Heart left ventricle (tissue), 16 donors: ENCODE measurements at regions of chr10 and their contacts with region 1.

Region 1: DNA sequence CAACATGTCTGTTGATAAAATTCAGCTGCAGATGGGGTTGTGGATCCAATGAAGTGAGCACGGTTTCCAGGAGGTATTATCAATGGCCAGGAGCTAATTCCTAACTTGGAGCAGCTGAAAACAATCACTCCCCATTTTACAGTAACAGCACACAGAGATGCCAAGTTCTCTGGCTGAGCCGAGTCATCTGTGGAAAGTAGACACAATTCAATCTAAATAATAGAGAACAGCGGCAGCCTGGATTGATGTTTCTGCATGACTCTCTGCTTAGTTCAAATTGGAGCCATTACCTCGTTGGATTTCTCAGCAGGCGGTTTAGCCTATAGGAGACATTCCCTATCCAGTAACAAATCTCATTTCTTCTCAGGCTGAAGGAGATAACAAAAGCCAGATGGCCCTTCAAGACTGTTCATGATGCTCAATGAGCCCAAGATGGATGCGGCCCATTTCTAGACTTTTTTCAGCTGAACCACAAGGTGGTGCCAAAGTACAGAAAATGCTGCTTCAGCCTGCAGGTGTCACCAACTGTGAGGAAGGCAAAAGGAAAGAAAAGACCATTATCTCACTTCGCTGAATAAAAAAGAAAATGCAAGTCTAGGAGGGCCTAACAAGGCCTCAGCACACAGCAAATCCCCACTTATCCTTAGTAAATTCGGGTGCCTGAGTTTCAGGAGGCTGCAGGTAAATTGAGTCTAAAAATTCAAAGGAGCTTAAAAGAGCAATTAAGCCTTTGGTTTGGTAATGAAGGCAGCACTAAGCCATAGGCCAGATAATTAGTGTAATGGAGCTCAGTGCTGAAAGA is 83.7 kb downstream of the SLC16A9 start:
- DNase-seq: peak in 3 of 5 donors; percentile 29 to 34 (median 31)
- ATAC-seq: peak; percentile 40 to 89 (median 82)
- H3K4me3 ChIP-seq: no peak overlapping the region
- H3K27ac ChIP-seq: peak overlapping the region in 2 of 12 donors; percentile 4 to 13
- H3K4me1 ChIP-seq: peaks cover 0 to 11% (median 0%) of the 10 kb centered on the region in 12 donors
- H3K27me3 ChIP-seq: peaks cover 0 to under 1% (median 0%) of the 10 kb centered on the region in 9 donors
- CTCF ChIP-seq: peak; percentile 67 to 90 (median 80)
- POLR2A ChIP-seq: no peak

Region 2: GRCh38 chr10:58781873-58782488 is 843.9 kb before region 1 on chr10:
- intact Hi-C with region 1: loop called in 5 of 10 experiments (anchors 2 to 10 kb)
- DNase-seq: no peak
- ATAC-seq: peak in 2 of 4 donors; percentile 51 to 58
- H3K4me3 ChIP-seq: no peak overlapping the region
- H3K27ac ChIP-seq: peak overlapping the region in 8 of 12 donors; percentile 5 to 61 (median 40)
- H3K4me1 ChIP-seq: peaks cover 0 to 46% (median 9%) of the 10 kb centered on the region in 12 donors
- H3K27me3 ChIP-seq: no peaks in the 10 kb centered on the region
- CTCF ChIP-seq: peak; percentile 39 to 72 (median 61)
- POLR2A ChIP-seq: no peak

Region 3: GRCh38 chr10:59234816-59235429 is 391.0 kb before region 1 on chr10:
- intact Hi-C with region 1: loop called (anchors 2 to 5 kb)
- DNase-seq: peak in 1 of 5 donors; percentile 15
- ATAC-seq: no peak
- H3K4me3 ChIP-seq: no peak overlapping the region
- H3K27ac ChIP-seq: no peak overlapping the region
- H3K4me1 ChIP-seq: no peaks in the 10 kb centered on the region
- H3K27me3 ChIP-seq: no peaks in the 10 kb centered on the region
- CTCF ChIP-seq: peak in 11 of 12 donors; percentile 44 to 75 (median 56)
- POLR2A ChIP-seq: no peak

Region 4: GRCh38 chr10:59434463-59435321 is 191.2 kb before region 1 on chr10:
- intact Hi-C with region 1: no loop called
- DNase-seq: no peak
- ATAC-seq: peak in 2 of 4 donors; percentile 39 to 50
- H3K4me3 ChIP-seq: no peak overlapping the region
- H3K27ac ChIP-seq: peak overlapping the region in 4 of 12 donors; percentile 2 to 36 (median 28)
- H3K4me1 ChIP-seq: peaks cover 0 to 19% (median 9%) of the 10 kb centered on the region in 12 donors
- H3K27me3 ChIP-seq: no peaks in the 10 kb centered on the region
- CTCF ChIP-seq: no peak
- POLR2A ChIP-seq: no peak

Region 5: GRCh38 chr10:59678884-59679301 is 53.0 kb after region 1 on chr10:
- intact Hi-C with region 1: no loop called
- DNase-seq: no peak
- ATAC-seq: no peak
- H3K4me3 ChIP-seq: no peak overlapping the region
- H3K27ac ChIP-seq: no peak overlapping the region
- H3K4me1 ChIP-seq: peaks cover 0 to 4% (median 0%) of the 10 kb centered on the region in 12 donors
- H3K27me3 ChIP-seq: no peaks in the 10 kb centered on the region
- CTCF ChIP-seq: no peak
- POLR2A ChIP-seq: no peak

Region 6: GRCh38 chr10:59808896-59809643 is 183.1 kb after region 1 on chr10:
- intact Hi-C with region 1: loop called in 9 of 10 experiments (anchors 1 to 5 kb)
- DNase-seq: peak; percentile 68 to 87 (median 81)
- ATAC-seq: peak; percentile 45 to 82 (median 76)
- H3K4me3 ChIP-seq: no peak overlapping the region
- H3K27ac ChIP-seq: peak overlapping the region in 3 of 12 donors; percentile 30 to 51 (median 32)
- H3K4me1 ChIP-seq: peaks cover 0 to 20% (median 2%) of the 10 kb centered on the region in 12 donors
- H3K27me3 ChIP-seq: no peaks in the 10 kb centered on the region
- CTCF ChIP-seq: peak; percentile 50 to 75 (median 64)
- POLR2A ChIP-seq: no peak

Region 7: GRCh38 chr10:59906417-59907202 is 280.7 kb after region 1 on chr10 and contains the start of gene CCDC6:
- intact Hi-C with region 1: loop called in 9 of 10 experiments (anchors 5 to 10 kb)
- DNase-seq: peak; percentile 93 to 96 (median 96)
- ATAC-seq: peak; percentile 90 to 96 (median 96)
- H3K4me3 ChIP-seq: peak within 1 kb of the TSS; percentile 76 to 98 (median 92)
- H3K27ac ChIP-seq: peak within 1 kb of the TSS; percentile 83 to 96 (median 91)
- H3K4me1 ChIP-seq: peaks cover 0 to 52% (median 29%) of the 10 kb centered on the region in 12 donors
- H3K27me3 ChIP-seq: no peaks in the 10 kb centered on the region
- CTCF ChIP-seq: peak; percentile 68 to 87 (median 80)
- POLR2A ChIP-seq: peak in 1 of 2 donors; percentile 88
- total RNA-seq, gene CCDC6: 13.8 to 47.1 (median 20.2) TPM

Region 8: GRCh38 chr10:60208676-60209269 is 582.9 kb after region 1 on chr10:
- intact Hi-C with region 1: loop called in 1 of 10 experiments (anchors 10 kb)
- DNase-seq: no peak
- ATAC-seq: peak in 2 of 4 donors; percentile 27 to 53
- H3K4me3 ChIP-seq: no peak overlapping the region
- H3K27ac ChIP-seq: no peak overlapping the region
- H3K4me1 ChIP-seq: peaks cover 0 to 11% (median 5%) of the 10 kb centered on the region in 12 donors
- H3K27me3 ChIP-seq: no peaks in the 10 kb centered on the region
- CTCF ChIP-seq: peak; percentile 28 to 75 (median 58)
- POLR2A ChIP-seq: no peak

Region 9: DNA sequence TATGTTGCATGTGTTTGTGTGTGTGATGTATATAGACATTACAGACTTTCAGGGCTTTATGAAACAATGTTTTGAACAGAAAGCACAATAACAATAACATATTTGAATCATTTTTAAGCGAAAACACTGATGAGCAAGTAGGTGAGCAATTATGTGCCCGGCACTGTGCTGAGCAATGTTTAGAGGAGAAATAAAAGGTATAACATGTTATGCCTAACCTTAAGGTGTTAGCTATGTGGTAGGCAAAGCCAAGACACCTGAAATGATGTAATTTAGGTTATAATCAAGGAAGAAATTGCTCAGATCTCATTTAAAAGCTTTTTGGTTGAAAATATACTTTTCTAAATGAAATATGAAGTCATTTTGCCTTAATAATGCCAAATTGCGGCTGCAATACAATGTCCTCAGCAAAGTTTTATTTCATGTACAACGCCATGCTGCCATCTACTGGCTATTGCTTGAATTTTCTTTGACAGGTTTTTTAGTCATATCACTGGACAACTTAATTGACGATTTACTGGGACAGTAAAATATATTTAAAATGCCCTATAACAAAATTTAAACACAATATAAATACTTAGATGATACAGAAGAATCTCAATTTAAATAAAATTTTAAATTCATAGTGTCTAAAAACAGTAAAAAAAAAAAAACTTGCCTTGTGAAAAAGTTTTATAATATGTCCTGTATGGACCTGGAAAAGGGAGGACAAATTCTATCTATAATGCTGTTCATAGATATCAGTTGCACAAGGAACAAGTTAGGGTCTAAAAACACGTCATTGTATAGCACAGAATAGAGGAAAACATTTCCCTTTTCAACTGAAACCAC is 1021.3 kb after region 1 on chr10:
- intact Hi-C with region 1: loop called in 2 of 10 experiments (anchors 10 kb)
- DNase-seq: peak in 1 of 5 donors; percentile 10
- ATAC-seq: peak in 1 of 4 donors; percentile 53
- H3K4me3 ChIP-seq: no peak overlapping the region
- H3K27ac ChIP-seq: no peak overlapping the region
- H3K4me1 ChIP-seq: peaks cover 0 to 3% (median 0%) of the 10 kb centered on the region in 12 donors
- H3K27me3 ChIP-seq: no peaks in the 10 kb centered on the region
- CTCF ChIP-seq: peak; percentile 64 to 83 (median 76)
- POLR2A ChIP-seq: no peak